ENCODE measurements at regions of chr2 and their contacts with region 1.

Region 1: GRCh38 chr2:122072666-122073065 is 317.2 kb downstream of the TSN start:
- DNase-seq: no peak
- H3K4me3 ChIP-seq: no peak overlapping the region
- H3K27ac ChIP-seq: no peak overlapping the region
- H3K4me1 ChIP-seq: no peaks in the 10 kb centered on the region
- H3K27me3 ChIP-seq: no peaks in the 10 kb centered on the region
- CTCF ChIP-seq: no peak
- POLR2A ChIP-seq: no peak

Region 2: GRCh38 chr2:122100346-122100745 is 27.7 kb after region 1 on chr2:
- intact Hi-C with region 1: no loop called
- DNase-seq: no peak
- H3K4me3 ChIP-seq: no peak overlapping the region
- H3K27ac ChIP-seq: no peak overlapping the region
- H3K4me1 ChIP-seq: no peaks in the 10 kb centered on the region
- H3K27me3 ChIP-seq: no peaks in the 10 kb centered on the region
- CTCF ChIP-seq: no peak
- POLR2A ChIP-seq: no peak

Region 3: DNA sequence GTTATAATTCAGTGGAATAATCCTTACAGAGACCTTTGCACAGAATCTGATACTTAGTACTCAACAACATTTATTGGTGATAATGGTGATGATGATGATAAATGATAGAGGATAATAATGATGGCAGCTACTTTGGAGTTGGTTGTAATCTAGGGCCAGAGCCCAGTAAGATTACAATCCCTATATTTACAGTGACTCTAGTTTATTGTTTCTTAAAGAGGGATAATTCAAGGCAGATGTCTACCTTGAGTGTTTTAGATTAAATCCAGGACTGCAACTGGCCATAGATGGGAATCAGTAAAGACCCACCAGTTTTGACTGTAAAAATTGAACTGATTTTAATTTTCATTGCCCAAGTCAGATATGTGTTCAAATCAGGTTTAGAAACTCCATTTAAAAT is 1138.5 kb after region 1 on chr2:
- intact Hi-C with region 1: loop called (anchors 5 kb)
- DNase-seq: no peak
- H3K4me3 ChIP-seq: no peak overlapping the region
- H3K27ac ChIP-seq: no peak overlapping the region
- H3K4me1 ChIP-seq: no peaks in the 10 kb centered on the region
- H3K27me3 ChIP-seq: no peaks in the 10 kb centered on the region
- CTCF ChIP-seq: no peak
- POLR2A ChIP-seq: no peak